OCI-LY7 (cell line): ENCODE measurements at regions of chr10 and their contacts with region 1.

Region 1: GRCh38 chr10:99732033-99732912 is at the starts of genes COX15 and CUTC:
- DNase-seq: peak; percentile 96
- H3K4me3 ChIP-seq: peak within 1 kb of the TSS; percentile 78
- H3K27ac ChIP-seq: peak within 1 kb of the TSS; percentile 74
- H3K4me1 ChIP-seq: peaks cover 18% of the 10 kb centered on the region
- CTCF ChIP-seq: peak; percentile 68
- total RNA-seq, gene COX15: 18.5 and 19.6 TPM in 2 replicates
- total RNA-seq, gene CUTC: 29.9 and 37.1 TPM in 2 replicates

Region 2: DNA sequence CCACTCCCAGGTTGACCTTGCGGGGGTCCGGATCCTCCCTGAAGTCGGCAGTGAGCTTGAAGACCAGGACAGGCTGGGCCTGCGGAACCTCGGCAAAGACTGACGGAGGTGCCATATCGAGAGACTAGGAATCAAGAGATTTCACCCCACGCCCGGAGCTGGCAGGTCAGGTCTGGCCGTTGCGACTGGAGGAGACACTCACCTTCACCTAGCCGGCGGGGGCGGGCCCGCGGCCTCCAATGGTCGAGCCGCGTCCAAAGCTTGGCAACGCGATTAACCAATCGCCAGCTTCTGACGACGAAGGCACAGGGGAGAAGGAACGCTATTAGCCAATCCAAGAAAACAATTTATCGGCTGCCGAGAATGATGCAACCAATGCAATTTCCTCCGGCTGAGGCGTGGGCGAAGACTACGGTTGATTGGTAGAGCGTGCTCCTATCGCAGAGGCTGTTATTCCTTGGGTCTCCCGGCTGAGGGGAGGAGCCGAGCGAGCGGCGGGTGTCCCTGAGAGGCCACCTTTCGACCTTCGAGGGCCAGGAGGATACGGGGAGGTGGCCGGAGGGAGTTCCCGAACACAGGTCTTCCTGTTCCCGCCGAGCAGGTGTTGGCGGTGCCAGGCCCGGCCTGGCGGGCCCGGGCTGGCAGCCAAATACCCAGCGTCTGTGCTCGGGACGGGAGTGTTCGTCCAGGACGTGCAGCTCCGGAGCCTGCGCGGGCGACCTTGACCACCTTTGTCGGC is 301.7 kb before region 1 on chr10 and contains the start of gene GOT1:
- CTCF ChIA-PET with region 1: no interaction called
- POLR2A ChIA-PET with region 1: no interaction called
- intact Hi-C with region 1: loop called (anchors 10 kb)
- DNase-seq: peak; percentile 98
- H3K4me3 ChIP-seq: peak within 1 kb of the TSS; percentile 96
- H3K27ac ChIP-seq: peak within 1 kb of the TSS; percentile 61
- H3K4me1 ChIP-seq: peaks cover 14% of the 10 kb centered on the region
- CTCF ChIP-seq: no peak
- total RNA-seq, gene GOT1: 24.5 and 26.4 TPM in 2 replicates

Region 3: DNA sequence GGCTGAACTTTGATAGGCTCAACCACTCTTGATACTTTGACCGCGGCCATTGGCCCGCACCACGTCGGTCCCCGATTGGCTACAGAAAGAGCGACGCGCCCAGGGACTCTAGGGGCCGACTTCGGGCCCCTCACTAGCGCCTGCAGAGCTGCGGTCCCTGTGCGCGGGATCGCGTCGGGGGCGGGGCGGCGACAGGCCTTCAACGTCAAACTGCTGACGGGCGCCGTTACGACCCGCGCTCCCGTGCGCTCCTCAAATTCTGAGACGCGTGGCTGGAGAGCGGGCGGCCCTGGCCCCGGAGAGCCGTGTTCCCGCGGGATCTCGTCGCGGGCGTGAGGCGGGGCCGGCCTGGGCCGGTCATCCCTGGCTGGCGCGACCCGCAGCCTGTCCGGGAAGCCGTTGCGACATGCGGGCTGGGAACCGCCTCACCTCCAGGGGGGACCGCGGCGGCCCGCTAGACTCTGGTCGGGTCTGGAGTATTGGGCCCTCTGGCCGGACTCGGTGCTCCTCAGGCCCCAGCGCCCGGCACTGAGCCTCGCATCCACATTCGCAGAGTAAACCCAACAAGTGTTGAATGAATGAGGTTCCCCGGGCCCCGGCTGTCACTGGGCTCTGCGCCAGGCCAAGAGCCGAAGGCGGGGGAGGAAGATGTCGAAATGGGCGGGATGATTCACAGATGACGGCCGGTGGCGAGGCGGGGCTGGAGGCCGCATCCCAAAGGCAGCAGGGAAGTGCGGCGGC is 111.4 kb before region 1 on chr10:
- CTCF ChIA-PET with region 1: interaction called, 4 read pairs
- POLR2A ChIA-PET with region 1: interaction called, 5 read pairs
- intact Hi-C with region 1: loop called (anchors 5 kb)
- DNase-seq: peak; percentile 69
- H3K4me3 ChIP-seq: peak overlapping the region; percentile 96
- H3K27ac ChIP-seq: peak overlapping the region; percentile 85
- H3K4me1 ChIP-seq: peaks cover 25% of the 10 kb centered on the region
- CTCF ChIP-seq: no peak; the same call in 1 of the 2 replicates

Region 4: GRCh38 chr10:99630991-99631390 is 101.3 kb before region 1 on chr10:
- CTCF ChIA-PET with region 1: no interaction called
- POLR2A ChIA-PET with region 1: no interaction called
- intact Hi-C with region 1: no loop called
- DNase-seq: no peak
- H3K4me3 ChIP-seq: no peak overlapping the region
- H3K27ac ChIP-seq: no peak overlapping the region
- H3K4me1 ChIP-seq: no peaks in the 10 kb centered on the region
- CTCF ChIP-seq: no peak

Region 5: GRCh38 chr10:99659031-99659867 is 73.0 kb before region 1 on chr10 and contains the start of gene ENTPD7:
- CTCF ChIA-PET with region 1: interaction called, 3 read pairs
- POLR2A ChIA-PET with region 1: interaction called, 6 read pairs
- intact Hi-C with region 1: loop called (anchors 2 kb)
- DNase-seq: peak; percentile 85
- H3K4me3 ChIP-seq: peak within 1 kb of the TSS; percentile 76
- H3K27ac ChIP-seq: no peak within 1 kb of the TSS
- H3K4me1 ChIP-seq: no peaks in the 10 kb centered on the region
- CTCF ChIP-seq: no peak
- total RNA-seq, gene ENTPD7: 2.8 and 3.3 TPM in 2 replicates

Region 6: DNA sequence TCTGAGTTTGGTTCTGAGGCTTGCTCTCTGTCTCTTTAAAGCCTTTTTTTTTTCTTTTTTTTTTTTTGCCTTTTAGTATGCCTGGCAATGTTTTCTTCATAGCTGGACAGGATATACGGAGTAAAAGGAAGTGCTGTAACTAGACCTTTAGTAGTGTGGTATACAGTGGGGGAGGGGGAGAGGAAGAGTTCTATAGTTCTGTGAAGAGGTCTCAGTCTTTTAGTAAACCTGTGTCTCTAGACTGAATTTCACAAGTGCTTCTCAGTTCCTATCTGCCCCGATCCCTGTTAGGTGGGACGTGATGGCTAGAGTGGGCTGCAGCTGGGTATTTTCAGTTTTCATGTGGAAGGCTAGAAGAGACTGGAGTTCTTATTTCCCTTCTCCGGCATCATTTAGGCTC is 47.1 kb after region 1 on chr10:
- CTCF ChIA-PET with region 1: no interaction called
- POLR2A ChIA-PET with region 1: interaction called, 5 read pairs
- intact Hi-C with region 1: loop called (anchors 2 kb)
- DNase-seq: peak; percentile 83
- H3K4me3 ChIP-seq: peak overlapping the region; percentile 12
- H3K27ac ChIP-seq: peak overlapping the region; percentile 43
- H3K4me1 ChIP-seq: peaks cover 36% of the 10 kb centered on the region
- CTCF ChIP-seq: no peak